Activated CD4-positive, alpha-beta memory T cell treated with anti-CD3 and anti-CD28 coated beads for 36 hours (primary cell): ENCODE measurements at regions of chr4 and their contacts with region 1.

Region 1: DNA sequence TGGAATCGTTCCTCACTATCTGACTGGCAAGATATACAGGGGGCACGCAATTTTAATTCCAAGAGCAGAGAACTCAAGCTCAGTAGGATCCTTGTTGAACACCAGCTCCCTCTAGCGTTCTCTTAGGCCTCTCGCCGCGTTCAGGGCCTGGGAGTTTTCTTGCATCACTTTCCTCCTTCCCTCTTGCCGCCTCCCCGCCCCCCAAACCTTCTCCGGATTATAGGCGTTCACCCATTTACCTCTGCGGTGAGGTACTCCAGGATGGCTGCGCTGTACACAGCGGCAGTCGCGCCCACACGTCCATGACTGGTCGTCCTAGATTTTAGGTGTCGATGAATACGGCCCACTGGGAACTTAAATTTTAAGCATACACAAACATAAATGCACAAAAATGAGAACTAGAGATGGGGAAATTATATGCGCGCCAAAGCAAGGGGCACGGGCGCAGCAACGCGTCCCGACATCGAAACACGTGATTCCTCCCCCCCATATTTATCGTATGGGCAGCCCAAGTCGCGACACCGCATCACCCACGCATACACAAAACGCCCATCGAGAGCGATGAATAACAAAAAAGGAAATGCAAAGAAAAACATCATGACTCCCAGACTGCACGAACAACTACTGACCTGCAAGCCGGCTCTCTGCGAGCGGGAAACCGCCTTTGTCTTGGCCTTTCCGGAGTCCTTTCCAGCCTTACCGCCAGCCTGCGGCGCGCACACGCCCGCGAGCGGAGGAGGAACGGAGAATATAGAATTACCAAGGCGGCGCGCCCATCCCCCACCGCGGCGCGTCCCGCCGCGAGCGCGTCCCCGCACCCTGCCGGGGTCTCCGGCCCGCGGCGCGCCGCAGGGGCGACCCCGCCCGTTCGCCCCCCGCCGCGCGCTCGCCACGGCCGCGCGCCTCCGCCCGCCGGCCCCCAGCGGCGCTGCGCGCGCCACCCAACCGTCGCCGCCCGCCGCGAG is 759 bp downstream of the H2AZ1 start:
- DNase-seq: peak; percentile 95
- H3K4me3 Mint-ChIP-seq: no peak overlapping the region
- H3K27ac Mint-ChIP-seq: no peak overlapping the region
- H3K4me1 Mint-ChIP-seq: peaks cover 35% of the 10 kb centered on the region
- H3K27me3 Mint-ChIP-seq: no peaks in the 10 kb centered on the region

Region 2: GRCh38 chr4:98260579-98261290 is 1688.6 kb before region 1 on chr4:
- CTCF ChIA-PET with region 1: no interaction called
- POLR2A ChIA-PET with region 1: no interaction called
- intact Hi-C with region 1: loop called (anchors 10 kb)
- DNase-seq: peak; percentile 96
- H3K4me3 Mint-ChIP-seq: peak overlapping the region; percentile 95
- H3K27ac Mint-ChIP-seq: peak overlapping the region; percentile 97
- H3K4me1 Mint-ChIP-seq: peaks cover 43% of the 10 kb centered on the region
- H3K27me3 Mint-ChIP-seq: no peaks in the 10 kb centered on the region

Region 3: GRCh38 chr4:99088481-99089365 is 860.6 kb before region 1 on chr4 and contains the start of gene ADH5:
- CTCF ChIA-PET with region 1: no interaction called
- POLR2A ChIA-PET with region 1: interaction called, 3 read pairs
- intact Hi-C with region 1: loop called (anchors 1 kb)
- DNase-seq: peak; percentile 95
- H3K4me3 Mint-ChIP-seq: peak within 1 kb of the TSS; percentile 96
- H3K27ac Mint-ChIP-seq: peak within 1 kb of the TSS; percentile 93
- H3K4me1 Mint-ChIP-seq: peaks cover 37% of the 10 kb centered on the region
- H3K27me3 Mint-ChIP-seq: no peaks in the 10 kb centered on the region
- total RNA-seq, gene ADH5: 112 to 119 TPM

Region 4: GRCh38 chr4:99563310-99564186 is 385.8 kb before region 1 on chr4 and contains the start of gene TRMT10A:
- CTCF ChIA-PET with region 1: interaction called, 4 read pairs
- POLR2A ChIA-PET with region 1: interaction called, 4 read pairs
- intact Hi-C with region 1: loop called (anchors 1 kb)
- DNase-seq: peak; percentile 98
- H3K4me3 Mint-ChIP-seq: peak within 1 kb of the TSS; percentile 93
- H3K27ac Mint-ChIP-seq: peak within 1 kb of the TSS; percentile 98
- H3K4me1 Mint-ChIP-seq: peaks cover 6% of the 10 kb centered on the region
- H3K27me3 Mint-ChIP-seq: peaks cover 7% of the 10 kb centered on the region
- total RNA-seq, gene TRMT10A: 5.6 to 8.9 TPM

Region 5: GRCh38 chr4:99816545-99817308 is 132.6 kb before region 1 on chr4 and contains the start of gene DAPP1:
- CTCF ChIA-PET with region 1: interaction called, 24 read pairs
- POLR2A ChIA-PET with region 1: interaction called, 9 read pairs
- intact Hi-C with region 1: loop called (anchors 1 kb)
- DNase-seq: peak; percentile 89
- H3K4me3 Mint-ChIP-seq: peak within 1 kb of the TSS; percentile 81
- H3K27ac Mint-ChIP-seq: peak within 1 kb of the TSS; percentile 93
- H3K4me1 Mint-ChIP-seq: peaks cover 64% of the 10 kb centered on the region
- H3K27me3 Mint-ChIP-seq: no peaks in the 10 kb centered on the region
- total RNA-seq, gene DAPP1: 23.6 TPM

Region 6: DNA sequence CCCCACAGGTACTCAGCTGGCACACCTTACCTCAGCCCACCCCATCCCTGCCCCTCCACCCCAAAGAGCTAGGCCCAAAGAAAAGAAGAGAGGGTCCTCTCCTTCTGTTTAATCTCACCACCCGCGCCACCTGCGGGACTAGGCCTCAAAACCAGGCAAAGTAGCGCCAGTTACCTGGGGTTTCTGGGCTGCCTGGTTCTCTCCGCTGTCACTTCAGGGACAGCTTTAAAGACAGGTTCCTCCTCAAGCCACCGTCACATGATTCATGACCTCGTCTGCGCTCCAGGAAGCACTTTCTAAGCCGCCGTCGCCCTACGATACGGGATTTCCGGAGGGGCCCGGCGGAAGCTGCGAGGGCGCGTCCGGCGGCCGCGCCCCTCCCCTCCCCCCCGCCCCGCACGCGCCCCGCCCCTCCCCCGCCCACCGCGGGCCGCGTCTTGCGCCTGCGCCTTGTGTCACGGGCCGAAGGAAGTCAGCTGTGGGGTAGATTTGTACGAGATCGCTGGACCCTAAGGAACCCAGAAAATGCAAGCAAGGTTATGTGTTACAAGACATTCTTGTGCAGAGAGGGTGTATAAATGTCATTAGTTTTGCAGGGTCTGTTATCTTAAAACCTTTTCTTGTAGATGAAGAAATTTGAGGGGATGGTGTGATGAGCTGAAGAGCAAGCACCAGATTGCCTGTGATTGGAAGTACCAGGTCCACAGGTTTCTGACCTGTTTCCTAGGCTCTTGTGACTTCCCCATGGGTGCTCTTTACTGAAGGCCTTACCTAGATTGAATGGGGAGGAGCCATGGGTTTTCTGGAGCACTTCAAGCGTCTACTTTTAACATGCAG is 54.9 kb before region 1 on chr4 and contains the start of gene LAMTOR3:
- CTCF ChIA-PET with region 1: interaction called, 7 read pairs
- POLR2A ChIA-PET with region 1: interaction called, 15 read pairs
- intact Hi-C with region 1: loop called (anchors 1 kb)
- DNase-seq: peak; percentile 94
- H3K4me3 Mint-ChIP-seq: peak within 1 kb of the TSS; percentile 98
- H3K27ac Mint-ChIP-seq: peak within 1 kb of the TSS; percentile 87
- H3K4me1 Mint-ChIP-seq: peaks cover 39% of the 10 kb centered on the region
- H3K27me3 Mint-ChIP-seq: no peaks in the 10 kb centered on the region
- total RNA-seq, gene LAMTOR3: 21.8 to 26.1 TPM

Region 7: GRCh38 chr4:100093091-100093866 is 144.0 kb after region 1 on chr4:
- CTCF ChIA-PET with region 1: interaction called, 9 read pairs
- POLR2A ChIA-PET with region 1: no interaction called
- intact Hi-C with region 1: loop called (anchors 1 kb)
- DNase-seq: peak; percentile 93
- H3K4me3 Mint-ChIP-seq: no peak overlapping the region
- H3K27ac Mint-ChIP-seq: peak overlapping the region; percentile 36
- H3K4me1 Mint-ChIP-seq: peaks cover 39% of the 10 kb centered on the region
- H3K27me3 Mint-ChIP-seq: no peaks in the 10 kb centered on the region

Region 8: GRCh38 chr4:100189820-100190642 is 240.7 kb after region 1 on chr4 and contains the start of gene DDIT4L:
- CTCF ChIA-PET with region 1: no interaction called
- POLR2A ChIA-PET with region 1: no interaction called
- intact Hi-C with region 1: no loop called
- DNase-seq: peak; percentile 14
- H3K4me3 Mint-ChIP-seq: peak within 1 kb of the TSS; percentile 70
- H3K27ac Mint-ChIP-seq: no peak within 1 kb of the TSS
- H3K4me1 Mint-ChIP-seq: peaks cover 15% of the 10 kb centered on the region
- H3K27me3 Mint-ChIP-seq: peaks cover 42% of the 10 kb centered on the region
- total RNA-seq, gene DDIT4L: 0.24 to 0.34 TPM

Region 9: GRCh38 chr4:100299046-100299840 is 349.9 kb after region 1 on chr4:
- CTCF ChIA-PET with region 1: no interaction called
- POLR2A ChIA-PET with region 1: no interaction called
- intact Hi-C with region 1: no loop called
- DNase-seq: no peak
- H3K4me3 Mint-ChIP-seq: no peak overlapping the region
- H3K27ac Mint-ChIP-seq: no peak overlapping the region
- H3K4me1 Mint-ChIP-seq: no peaks in the 10 kb centered on the region
- H3K27me3 Mint-ChIP-seq: peaks cover 6% of the 10 kb centered on the region